ENCODE measurements at regions of chr6 and their contacts with region 1.

Region 1: GRCh38 chr6:28863604-28864320 is 60.0 kb downstream of the TRIM27 start:
- DNase-seq: peak; percentile 89
- H3K4me3 Mint-ChIP-seq: peak overlapping the region; percentile 86
- H3K27ac Mint-ChIP-seq: peak overlapping the region; percentile 92
- H3K4me1 Mint-ChIP-seq: peaks cover 33% of the 10 kb centered on the region
- H3K27me3 Mint-ChIP-seq: peaks cover 3% of the 10 kb centered on the region

Region 2: DNA sequence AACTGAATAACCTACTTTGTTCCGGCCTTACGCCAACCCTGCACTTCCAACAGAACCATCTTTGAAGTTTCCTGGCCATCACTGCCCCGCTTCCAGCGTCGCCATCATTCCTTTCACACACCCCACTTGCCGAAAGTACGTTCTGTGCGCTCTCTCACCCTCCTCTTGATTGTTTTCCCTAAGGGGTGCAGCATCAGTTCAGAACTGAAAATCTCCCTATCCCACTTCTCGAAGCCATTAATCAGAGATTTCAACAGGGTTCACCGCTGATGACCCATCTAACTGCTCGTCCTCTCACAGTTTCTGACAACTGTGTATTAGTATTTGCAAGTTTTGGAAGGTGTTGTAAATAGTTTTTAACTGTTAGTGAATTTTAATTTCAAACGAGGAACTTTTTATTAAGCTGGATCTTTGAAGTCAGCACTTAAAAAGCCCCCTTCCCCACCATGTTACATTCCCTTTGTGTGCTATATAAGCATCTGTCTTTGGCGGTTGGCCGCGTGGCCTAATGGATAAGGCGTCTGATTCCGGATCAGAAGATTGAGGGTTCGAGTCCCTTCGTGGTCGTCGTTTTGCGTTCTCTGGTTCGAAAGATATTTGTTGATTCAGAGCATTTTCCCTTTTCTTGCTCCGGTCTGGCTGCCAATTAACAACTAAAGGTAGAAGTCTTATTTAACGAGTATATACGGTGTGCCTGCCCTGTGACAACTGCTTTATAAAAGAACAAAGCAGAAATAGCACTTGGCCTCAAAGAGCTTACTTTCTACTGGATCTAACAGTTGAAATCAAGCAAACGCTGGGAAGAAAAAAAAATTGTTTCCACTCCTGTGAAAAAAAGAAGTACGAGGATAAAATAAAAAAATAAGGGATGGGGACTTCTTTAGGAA is 17.4 kb after region 1 on chr6:
- CTCF ChIA-PET with region 1: no interaction called
- intact Hi-C with region 1: loop called (anchors 1 kb)
- DNase-seq: peak; percentile 86
- H3K4me3 Mint-ChIP-seq: peak overlapping the region; percentile 76
- H3K27ac Mint-ChIP-seq: peak overlapping the region; percentile 83
- H3K4me1 Mint-ChIP-seq: peaks cover 36% of the 10 kb centered on the region
- H3K27me3 Mint-ChIP-seq: peaks cover 5% of the 10 kb centered on the region

Region 3: GRCh38 chr6:28923318-28924102 is 59.7 kb after region 1 on chr6 and contains the start of gene TRIM27:
- CTCF ChIA-PET with region 1: no interaction called
- intact Hi-C with region 1: loop called (anchors 1 kb)
- DNase-seq: peak; percentile 77
- H3K4me3 Mint-ChIP-seq: peak within 1 kb of the TSS; percentile 93
- H3K27ac Mint-ChIP-seq: peak within 1 kb of the TSS; percentile 95
- H3K4me1 Mint-ChIP-seq: peaks cover 39% of the 10 kb centered on the region
- H3K27me3 Mint-ChIP-seq: no peaks in the 10 kb centered on the region
- total RNA-seq, gene TRIM27: 35.8 to 41.4 TPM